Right cardiac atrium (tissue), 5 donors: ENCODE measurements at regions of chr2 and their contacts with region 1.

Region 1: GRCh38 chr2:199861132-199861774 is 10.3 kb upstream of the FTCDNL1 start:
- DNase-seq: no peak
- ATAC-seq: no peak
- H3K4me3 ChIP-seq: no peak overlapping the region
- H3K27ac ChIP-seq: no peak overlapping the region
- H3K4me1 ChIP-seq: no peaks in the 10 kb centered on the region
- H3K27me3 ChIP-seq: no peaks in the 10 kb centered on the region

Region 2: DNA sequence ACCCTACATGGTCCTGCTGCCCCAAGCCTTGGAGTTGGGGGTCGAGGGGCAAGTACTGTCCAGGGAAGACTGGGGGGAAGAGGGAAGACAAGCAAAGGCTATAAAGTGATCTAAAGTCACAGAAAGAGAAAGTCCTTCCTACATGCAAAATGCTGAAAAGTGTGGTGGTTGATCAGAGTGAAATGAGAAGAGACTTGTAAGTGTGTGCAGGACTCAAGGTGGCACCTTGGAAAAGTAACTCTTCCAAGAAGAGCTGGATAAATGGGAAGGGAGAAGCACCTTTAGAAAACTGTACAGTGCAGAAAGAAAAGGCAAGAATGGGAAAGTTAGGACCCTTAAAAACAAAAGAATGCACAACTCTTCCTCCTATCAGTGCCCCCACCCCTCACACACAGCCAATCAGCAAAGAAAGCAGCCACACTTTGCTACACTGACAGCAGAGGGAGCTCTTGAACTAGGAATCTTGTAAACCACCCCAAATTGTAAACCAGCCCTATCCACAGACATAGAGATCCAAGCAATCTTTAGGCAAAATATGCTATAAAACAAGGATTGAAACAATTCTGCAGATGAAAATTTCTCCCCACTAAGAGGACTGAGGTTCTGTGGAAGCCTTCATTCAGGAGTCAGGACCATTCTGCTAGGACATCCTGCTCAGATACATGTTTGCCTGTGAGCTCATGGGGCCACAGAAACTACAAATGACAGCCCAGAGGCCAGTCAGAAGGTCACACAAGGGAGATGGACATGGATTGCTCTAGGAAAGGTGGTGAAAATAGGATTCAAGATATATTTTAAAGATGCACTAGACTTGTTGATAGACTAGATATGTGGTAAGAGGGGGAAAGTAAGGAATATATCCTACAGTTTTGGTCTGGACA is 156.7 kb before region 1 on chr2:
- intact Hi-C with region 1: loop called in 1 of 4 experiments (anchors 10 kb)
- DNase-seq: no peak
- ATAC-seq: no peak
- H3K4me3 ChIP-seq: no peak overlapping the region
- H3K27ac ChIP-seq: no peak overlapping the region
- H3K4me1 ChIP-seq: no peaks in the 10 kb centered on the region
- H3K27me3 ChIP-seq: no peaks in the 10 kb centered on the region

Region 3: DNA sequence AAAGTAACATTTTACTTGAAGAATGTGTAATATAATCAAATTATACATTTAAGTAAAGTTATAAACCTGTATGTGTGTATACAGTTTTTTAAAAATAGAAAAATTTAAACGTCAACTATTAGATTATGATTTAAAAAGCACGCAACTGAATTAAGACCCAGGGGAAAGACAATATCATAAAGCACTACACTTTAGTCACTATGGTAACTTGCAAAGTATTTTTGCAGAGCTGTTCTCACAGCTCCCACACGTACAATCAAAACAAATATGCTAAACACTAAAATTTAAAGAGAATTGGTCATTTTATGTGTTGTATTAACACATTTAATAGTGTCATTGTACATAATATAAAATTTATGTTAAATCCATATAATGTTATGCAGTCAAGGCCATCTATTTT is 69.9 kb before region 1 on chr2:
- intact Hi-C with region 1: no loop called
- DNase-seq: no peak
- ATAC-seq: no peak
- H3K4me3 ChIP-seq: no peak overlapping the region
- H3K27ac ChIP-seq: no peak overlapping the region
- H3K4me1 ChIP-seq: no peaks in the 10 kb centered on the region
- H3K27me3 ChIP-seq: no peaks in the 10 kb centered on the region